Activated CD8-positive, alpha-beta T cell treated with anti-CD3 and anti-CD28 coated beads for 36 hours (primary cell): ENCODE measurements at regions of chr20 and their contacts with region 1.

Region 1: GRCh38 chr20:5215672-5216304 is 89.0 kb downstream of the CDS2 start:
- DNase-seq: no peak
- ATAC-seq: no peak
- H3K4me3 Mint-ChIP-seq: no peak overlapping the region
- H3K27ac Mint-ChIP-seq: no peak overlapping the region
- H3K4me1 Mint-ChIP-seq: no peaks in the 10 kb centered on the region
- H3K27me3 Mint-ChIP-seq: no peaks in the 10 kb centered on the region
- CTCF ChIP-seq: no peak

Region 2: DNA sequence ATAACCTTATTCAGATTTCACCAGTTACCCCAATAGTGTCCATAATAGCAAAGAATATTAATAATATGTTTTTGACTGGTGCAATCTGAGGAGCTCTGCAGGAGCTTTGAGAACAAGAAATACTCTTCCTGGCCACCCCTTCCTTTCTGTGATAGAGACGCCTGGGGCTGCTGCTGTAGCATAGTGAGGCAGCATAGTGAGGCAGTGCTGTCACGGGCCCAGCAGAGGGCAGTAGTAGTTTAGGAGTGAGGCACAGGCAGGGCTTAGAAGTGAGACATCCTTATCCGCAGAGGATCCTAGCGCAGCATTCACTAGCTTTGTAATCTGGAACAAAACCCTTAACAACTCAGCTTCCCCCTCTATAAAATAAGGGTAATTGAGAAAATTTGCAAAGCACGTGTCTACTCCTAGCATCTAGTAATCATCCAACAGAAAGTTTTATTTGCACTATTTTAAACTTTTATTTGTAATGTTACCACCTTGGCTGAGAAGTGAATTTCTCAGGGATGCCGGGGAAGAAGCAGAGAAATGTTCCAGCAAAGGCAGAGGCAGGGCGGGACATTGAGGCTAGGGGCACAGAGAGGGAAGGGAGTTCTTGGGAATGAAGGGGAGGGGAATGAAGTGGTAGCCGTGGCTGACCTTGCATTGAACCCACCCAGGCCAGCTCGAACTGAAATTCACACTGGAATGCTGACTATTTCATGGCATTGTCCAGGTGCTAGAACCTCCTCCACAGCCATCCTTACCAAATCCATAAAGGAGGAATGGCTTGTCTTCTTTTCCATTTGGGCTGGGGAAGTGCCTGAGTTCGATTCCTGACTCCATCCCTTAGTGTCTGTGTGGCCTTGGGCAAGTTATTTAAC is 10.2 kb before region 1 on chr20:
- CTCF ChIA-PET with region 1: interaction called, 165 read pairs
- POLR2A ChIA-PET with region 1: no interaction called
- intact Hi-C with region 1: no loop called
- DNase-seq: peak; percentile 81
- ATAC-seq: peak; percentile 99
- H3K4me3 Mint-ChIP-seq: no peak overlapping the region
- H3K27ac Mint-ChIP-seq: no peak overlapping the region
- H3K4me1 Mint-ChIP-seq: no peaks in the 10 kb centered on the region
- H3K27me3 Mint-ChIP-seq: no peaks in the 10 kb centered on the region
- CTCF ChIP-seq: peak; percentile 95